A673 (cell line): ENCODE measurements at regions of chr15 and their contacts with region 1.

Region 1: DNA sequence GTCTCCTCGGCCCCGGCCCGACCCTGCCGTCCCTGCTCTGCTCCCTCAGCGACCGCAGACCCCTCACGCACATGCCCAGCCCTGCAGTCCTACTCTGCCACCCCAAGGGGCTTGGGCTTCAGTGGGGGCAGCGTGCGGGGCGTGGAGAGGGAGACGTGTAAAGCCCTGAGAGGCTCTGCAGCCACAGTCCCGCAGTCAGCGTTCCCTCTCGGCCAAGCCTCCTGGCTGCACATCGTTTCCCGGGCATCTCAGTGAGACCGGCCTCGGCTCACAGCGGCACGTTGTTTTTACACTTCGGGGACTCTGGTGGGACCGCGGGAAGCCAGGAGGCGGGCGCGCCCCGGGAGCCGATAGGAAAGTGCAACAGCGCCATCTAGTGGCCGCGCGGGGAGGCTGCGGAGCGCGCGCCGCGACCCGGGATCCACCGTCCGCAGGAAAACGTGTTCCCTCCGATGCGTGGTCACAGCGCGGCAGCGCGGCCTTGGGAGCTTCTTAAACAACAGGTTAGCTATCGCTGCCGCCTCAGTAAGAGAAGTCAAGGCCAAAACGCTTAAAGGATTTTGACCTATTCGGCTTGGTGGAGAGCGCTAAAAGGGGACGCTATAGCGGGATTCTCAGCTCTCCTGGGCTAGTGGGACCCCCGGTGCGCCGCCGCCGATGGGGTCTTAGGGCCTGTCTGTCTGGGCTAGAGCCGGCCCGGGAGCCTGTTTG is 226.8 kb upstream of the IGF1R start:
- DNase-seq: peak; percentile 78
- H3K4me3 ChIP-seq: peak overlapping the region; percentile 32
- H3K27ac ChIP-seq: no peak overlapping the region
- H3K4me1 ChIP-seq: no peaks in the 10 kb centered on the region
- H3K27me3 ChIP-seq: peaks cover 26% of the 10 kb centered on the region
- CTCF ChIP-seq: peak; percentile 97

Region 2: DNA sequence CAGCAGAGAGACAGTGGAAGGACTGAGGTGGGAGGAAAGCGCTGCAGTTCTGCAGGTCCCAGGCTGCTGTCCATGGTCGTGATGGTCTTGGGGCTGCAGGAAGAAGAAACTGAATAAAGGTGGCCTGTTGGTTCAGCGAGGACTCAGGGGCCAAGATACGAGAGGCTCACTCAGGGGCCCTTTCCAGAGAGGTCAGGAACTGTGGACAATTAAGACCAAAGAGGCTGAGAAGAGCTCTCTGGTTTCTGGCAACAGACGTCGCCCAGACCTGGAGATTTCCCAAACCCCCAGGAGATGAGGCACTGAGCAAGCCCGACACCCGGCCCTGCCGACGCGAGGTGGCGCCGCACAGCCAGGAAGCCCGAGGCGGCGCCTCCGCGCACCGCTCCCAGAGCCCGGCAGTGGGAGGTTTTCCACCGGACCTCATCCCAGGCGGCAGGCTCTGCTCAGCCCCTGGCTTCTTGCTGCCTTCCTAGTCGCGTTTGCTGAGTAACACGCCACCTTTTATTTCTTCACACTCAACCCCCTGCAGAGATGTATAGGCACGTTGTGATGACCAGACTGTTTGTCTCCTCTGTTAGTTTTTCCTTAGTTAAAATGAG is 517.5 kb before region 1 on chr15:
- CTCF ChIA-PET with region 1: no interaction called
- POLR2A ChIA-PET with region 1: no interaction called
- intact Hi-C with region 1: loop called (anchors 2 kb)
- DNase-seq: peak; percentile 83
- H3K4me3 ChIP-seq: no peak overlapping the region
- H3K27ac ChIP-seq: no peak overlapping the region
- H3K4me1 ChIP-seq: peaks cover 2% of the 10 kb centered on the region
- H3K27me3 ChIP-seq: peaks cover 8% of the 10 kb centered on the region
- CTCF ChIP-seq: peak; percentile 88

Region 3: DNA sequence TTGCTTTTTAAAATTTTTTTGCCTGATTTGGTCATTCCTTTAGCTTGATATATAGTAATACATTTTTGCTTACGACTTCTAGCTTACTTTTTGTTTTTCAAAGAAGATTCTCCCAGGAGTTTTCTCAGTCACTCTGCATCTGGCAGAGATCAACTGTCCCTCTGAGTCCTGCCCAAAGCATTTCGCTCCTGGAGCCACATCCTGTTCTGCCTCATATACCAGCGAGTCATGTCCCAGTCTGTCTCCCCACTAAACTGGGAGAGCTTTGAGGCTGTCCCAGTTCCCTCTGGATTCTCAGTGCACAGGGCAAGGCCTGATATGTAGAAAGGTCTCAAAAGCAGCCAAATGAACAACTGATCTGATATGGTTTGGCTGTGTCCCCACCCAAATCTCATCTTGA is 134.7 kb before region 1 on chr15:
- CTCF ChIA-PET with region 1: no interaction called
- POLR2A ChIA-PET with region 1: no interaction called
- intact Hi-C with region 1: no loop called
- DNase-seq: no peak
- H3K4me3 ChIP-seq: no peak overlapping the region
- H3K27ac ChIP-seq: no peak overlapping the region
- H3K4me1 ChIP-seq: peaks cover 19% of the 10 kb centered on the region
- H3K27me3 ChIP-seq: no peaks in the 10 kb centered on the region
- CTCF ChIP-seq: no peak

Region 4: DNA sequence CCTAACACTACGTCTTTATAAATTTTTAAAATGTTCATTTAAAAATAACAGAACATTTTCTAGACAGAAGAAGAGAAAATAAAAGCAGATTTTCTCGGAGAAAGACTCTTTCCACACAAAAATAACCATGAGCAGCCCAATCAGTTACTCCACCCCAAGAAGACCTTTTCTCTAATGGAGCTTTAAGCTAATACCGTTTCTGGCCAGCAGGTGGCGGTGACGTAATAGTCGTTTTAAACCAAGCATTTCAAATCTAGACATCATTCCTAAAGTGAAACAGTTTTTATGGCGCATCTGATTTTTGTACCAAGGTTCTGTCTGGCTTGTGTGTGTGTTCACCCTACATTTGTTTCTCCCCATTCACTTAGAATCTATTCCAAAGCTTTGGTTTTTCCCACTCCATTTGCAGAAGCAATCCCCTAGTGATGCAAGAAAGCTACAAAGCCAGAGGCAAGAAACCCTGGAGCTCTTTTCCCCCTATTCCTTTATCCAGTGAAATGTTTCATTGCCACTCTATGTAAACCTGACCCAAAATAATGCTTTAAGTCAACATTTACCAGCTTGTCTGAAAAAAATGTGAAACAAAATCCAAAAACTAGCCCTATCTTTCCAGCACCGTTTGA is 109.9 kb before region 1 on chr15:
- CTCF ChIA-PET with region 1: interaction called, 17 read pairs
- POLR2A ChIA-PET with region 1: no interaction called
- intact Hi-C with region 1: loop called (anchors 1 kb)
- DNase-seq: peak; percentile 83
- H3K4me3 ChIP-seq: no peak overlapping the region
- H3K27ac ChIP-seq: no peak overlapping the region
- H3K4me1 ChIP-seq: no peaks in the 10 kb centered on the region
- H3K27me3 ChIP-seq: peaks cover 5% of the 10 kb centered on the region
- CTCF ChIP-seq: peak; percentile 87

Region 5: GRCh38 chr15:99719096-99719541 is 1297.5 kb after region 1 on chr15:
- CTCF ChIA-PET with region 1: interaction called, 16 read pairs
- POLR2A ChIA-PET with region 1: no interaction called
- intact Hi-C with region 1: no loop called
- DNase-seq: no peak
- H3K4me3 ChIP-seq: no peak overlapping the region
- H3K27ac ChIP-seq: no peak overlapping the region
- H3K4me1 ChIP-seq: peaks cover 26% of the 10 kb centered on the region
- H3K27me3 ChIP-seq: no peaks in the 10 kb centered on the region
- CTCF ChIP-seq: no peak